CD14-positive monocyte (primary cell): ENCODE measurements at regions of chr19 and their contacts with region 1.

Region 1: DNA sequence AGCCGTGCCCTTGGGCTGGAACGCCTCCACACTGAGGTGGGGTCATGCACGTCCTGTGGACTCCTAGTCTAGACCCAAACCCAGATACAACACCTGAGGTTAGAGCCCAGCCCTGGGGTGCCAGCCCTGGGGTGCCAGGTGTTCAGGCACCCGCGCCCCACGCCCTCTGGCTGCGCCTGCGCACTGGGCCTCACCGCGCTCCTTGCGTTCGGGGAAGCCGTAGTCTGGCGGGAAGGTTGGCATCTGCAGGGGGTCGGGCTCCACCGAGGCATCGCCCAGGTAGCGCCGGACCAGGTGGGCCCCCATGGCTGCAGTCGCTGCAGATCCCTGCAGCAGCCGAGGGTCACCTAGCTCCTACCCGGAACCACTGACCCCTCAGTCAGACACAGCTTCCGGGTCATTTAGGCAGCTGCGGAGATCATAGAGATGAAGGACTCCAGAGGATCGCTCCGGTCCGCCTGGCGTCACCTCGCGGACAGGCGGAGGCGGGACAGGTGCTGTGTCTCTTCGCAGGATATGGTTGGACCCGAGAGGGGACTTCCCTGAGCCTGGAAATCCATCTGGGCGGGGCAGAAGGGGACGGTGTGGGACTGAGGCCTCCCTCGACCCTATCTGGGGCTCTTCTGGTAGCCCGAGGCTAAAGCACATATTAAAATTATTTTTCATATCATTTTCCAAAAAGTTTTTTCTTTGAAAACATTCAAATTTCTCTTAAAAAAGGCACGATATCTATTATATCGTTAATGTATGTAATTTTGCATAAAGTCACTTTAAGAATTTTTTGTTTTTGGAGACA is at the start of gene NDUFB7:
- DNase-seq: peak; percentile 93 to 96 (median 95)
- H3K4me3 ChIP-seq: peak within 1 kb of the TSS; percentile 58 to 97 (median 97)
- H3K4me3 Mint-ChIP-seq: peak within 1 kb of the TSS; percentile 91 to 94
- H3K27ac ChIP-seq: peak within 1 kb of the TSS; percentile 16 to 88
- H3K27ac Mint-ChIP-seq: peak within 1 kb of the TSS; percentile 88 to 95 (median 92)
- H3K4me1 ChIP-seq: peaks cover 27 to 31% of the 10 kb centered on the region in 2 donors
- H3K4me1 Mint-ChIP-seq: peaks cover 43% of the 10 kb centered on the region
- H3K27me3 ChIP-seq: no peaks in the 10 kb centered on the region
- H3K27me3 Mint-ChIP-seq: no peaks in the 10 kb centered on the region
- CTCF ChIP-seq: peak; percentile 83
- polyA plus RNA-seq, gene NDUFB7: 137 to 313 (median 204) TPM

Region 2: GRCh38 chr19:14689598-14690503 is 118.0 kb after region 1 on chr19 and contains the start of gene ZNF333:
- intact Hi-C with region 1: loop called (anchors 2 kb)
- DNase-seq: peak; percentile 79 to 83 (median 83)
- H3K4me3 ChIP-seq: peak within 1 kb of the TSS; percentile 62 to 89 (median 85)
- H3K4me3 Mint-ChIP-seq: peak within 1 kb of the TSS; percentile 92 to 96
- H3K27ac ChIP-seq: peak within 1 kb of the TSS; percentile 93 to 95
- H3K27ac Mint-ChIP-seq: peak within 1 kb of the TSS; percentile 96 to 100 (median 100)
- H3K4me1 ChIP-seq: peaks cover 29 to 36% of the 10 kb centered on the region in 2 donors
- H3K4me1 Mint-ChIP-seq: peaks cover 34% of the 10 kb centered on the region
- H3K27me3 ChIP-seq: no peaks in the 10 kb centered on the region
- H3K27me3 Mint-ChIP-seq: no peaks in the 10 kb centered on the region
- CTCF ChIP-seq: no peak
- polyA plus RNA-seq, gene ZNF333: 7.6 to 43.0 (median 9.3) TPM

Region 3: DNA sequence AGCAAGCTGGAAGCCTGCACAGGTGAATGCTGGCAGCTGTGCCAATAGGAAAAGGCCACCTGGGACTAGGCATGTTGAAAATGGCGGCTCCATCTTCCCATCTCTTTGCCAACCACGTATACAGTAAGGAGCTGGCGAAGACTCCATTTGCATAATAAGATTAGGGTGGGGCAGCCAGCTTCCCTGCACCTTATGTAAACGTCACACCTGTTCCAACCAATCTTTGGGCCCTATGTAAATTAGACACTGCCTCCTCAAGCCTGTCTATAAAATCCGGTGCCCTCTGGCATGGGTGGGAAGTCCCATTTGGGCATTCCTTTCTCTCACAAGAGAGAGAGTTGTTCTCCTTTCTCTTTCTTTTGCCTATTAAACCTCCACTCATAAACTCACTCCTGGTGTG is 189.7 kb after region 1 on chr19:
- intact Hi-C with region 1: loop called in 1 of 2 experiments (anchors 10 kb)
- DNase-seq: no peak
- H3K4me3 ChIP-seq: no peak overlapping the region
- H3K4me3 Mint-ChIP-seq: no peak overlapping the region
- H3K27ac ChIP-seq: no peak overlapping the region
- H3K27ac Mint-ChIP-seq: peak overlapping the region in 2 of 7 donors; percentile 12 to 24
- H3K4me1 ChIP-seq: peaks cover 3 to 12% of the 10 kb centered on the region in 2 donors
- H3K4me1 Mint-ChIP-seq: peaks cover 10% of the 10 kb centered on the region
- H3K27me3 ChIP-seq: no peaks in the 10 kb centered on the region
- H3K27me3 Mint-ChIP-seq: peaks cover 0 to 3% (median 2%) of the 10 kb centered on the region in 3 donors
- CTCF ChIP-seq: no peak

Region 4: DNA sequence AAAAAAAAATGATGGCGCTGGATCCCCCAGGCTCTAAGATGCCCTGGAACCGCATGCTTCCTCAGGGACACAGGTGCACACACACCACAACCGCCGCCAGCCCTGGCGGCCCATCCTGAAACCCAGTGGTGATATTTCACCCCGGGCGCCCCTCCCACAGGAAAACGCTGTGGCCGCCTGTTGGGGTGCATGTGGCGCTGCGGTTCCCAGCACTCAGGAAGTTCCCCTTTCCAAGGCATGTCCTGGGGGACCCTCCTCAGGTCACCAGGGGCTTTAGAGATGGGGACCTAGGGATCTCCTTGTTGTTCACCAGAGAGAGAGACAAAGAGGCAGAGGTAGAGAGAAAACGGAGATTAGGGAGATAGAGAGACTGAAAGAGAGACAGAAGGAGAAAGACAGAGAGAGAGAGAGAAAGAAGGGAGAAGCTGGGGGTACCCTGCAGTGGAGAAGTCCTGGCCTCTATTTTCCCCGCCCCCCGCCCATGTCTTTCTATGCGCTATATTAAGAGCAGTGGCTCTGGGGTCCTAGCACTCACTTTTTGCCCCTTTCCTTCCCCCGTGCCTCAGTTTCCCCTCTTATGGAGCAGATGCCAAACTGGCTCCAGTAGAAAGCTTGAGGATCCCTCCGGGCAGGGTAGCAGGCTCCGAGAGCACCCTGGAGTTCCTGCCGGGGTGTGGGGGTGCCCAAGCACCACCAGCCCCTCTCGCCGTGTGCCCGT is 204.1 kb after region 1 on chr19:
- intact Hi-C with region 1: loop called in 1 of 2 experiments (anchors 10 kb)
- DNase-seq: peak; percentile 49 to 68 (median 62)
- H3K4me3 ChIP-seq: peak overlapping the region; percentile 74 to 99 (median 82)
- H3K4me3 Mint-ChIP-seq: peak overlapping the region; percentile 100
- H3K27ac ChIP-seq: peak overlapping the region; percentile 82 to 87
- H3K27ac Mint-ChIP-seq: peak overlapping the region; percentile 95 to 99 (median 97)
- H3K4me1 ChIP-seq: peaks cover 28 to 33% of the 10 kb centered on the region in 2 donors
- H3K4me1 Mint-ChIP-seq: peaks cover 50% of the 10 kb centered on the region
- H3K27me3 ChIP-seq: no peaks in the 10 kb centered on the region
- H3K27me3 Mint-ChIP-seq: peaks cover 4 to 11% (median 6%) of the 10 kb centered on the region in 3 donors
- CTCF ChIP-seq: peak; percentile 7